OCI-LY7 (cell line): ENCODE measurements at regions of chr12 and their contacts with region 1.

Region 1: DNA sequence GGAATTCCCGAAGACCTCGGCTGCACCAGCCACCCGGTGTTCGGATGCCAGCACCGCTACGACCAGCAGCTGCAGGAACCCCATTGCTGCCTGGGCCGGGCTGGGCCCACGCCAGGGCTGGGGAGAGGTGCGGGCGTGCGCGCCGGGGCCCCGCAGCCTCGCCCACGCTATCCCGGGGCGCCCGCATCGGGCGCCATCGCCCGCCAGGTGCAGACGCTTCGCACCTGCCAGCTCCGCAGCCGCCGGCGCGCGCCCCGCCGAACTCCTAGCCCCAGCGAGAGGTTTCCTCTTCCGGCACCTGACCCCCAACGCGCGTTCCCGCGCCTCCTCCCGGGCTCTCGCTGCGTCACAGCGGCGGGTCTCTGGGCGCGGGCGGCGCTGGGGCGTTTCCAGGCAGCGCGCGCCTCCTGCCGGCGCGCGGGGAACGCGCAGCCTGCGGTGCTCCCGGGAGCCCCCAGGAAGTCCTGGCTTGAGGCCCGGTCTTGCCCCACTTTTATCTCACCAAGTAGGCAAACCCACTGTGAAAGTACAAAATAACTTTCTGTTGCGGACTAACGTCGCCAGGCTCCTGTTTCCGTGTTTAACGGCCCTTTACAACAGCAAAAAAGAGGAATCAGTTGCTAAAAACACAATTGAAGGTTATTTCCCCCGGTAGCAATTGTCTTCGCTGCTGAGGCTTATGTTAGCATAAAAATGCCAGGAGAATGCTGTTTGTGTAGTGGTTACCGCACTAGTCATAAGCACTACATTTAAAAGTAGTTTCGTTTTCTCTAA is at the start of gene TM7SF3:
- DNase-seq: peak; percentile 97
- H3K4me3 ChIP-seq: peak within 1 kb of the TSS; percentile 93
- H3K27ac ChIP-seq: peak within 1 kb of the TSS; percentile 63
- H3K4me1 ChIP-seq: peaks cover 55% of the 10 kb centered on the region
- CTCF ChIP-seq: peak; percentile 94
- total RNA-seq, gene TM7SF3: 38.2 and 48.3 TPM in 2 replicates

Region 2: GRCh38 chr12:26153421-26154154 is 860.7 kb before region 1 on chr12:
- CTCF ChIA-PET with region 1: no interaction called
- POLR2A ChIA-PET with region 1: no interaction called
- intact Hi-C with region 1: loop called (anchors 5 kb)
- DNase-seq: no peak
- H3K4me3 ChIP-seq: no peak overlapping the region
- H3K27ac ChIP-seq: no peak overlapping the region
- H3K4me1 ChIP-seq: peaks cover 22% of the 10 kb centered on the region
- CTCF ChIP-seq: no peak

Region 3: GRCh38 chr12:26732005-26732908 is 282.0 kb before region 1 on chr12:
- CTCF ChIA-PET with region 1: no interaction called
- POLR2A ChIA-PET with region 1: no interaction called
- intact Hi-C with region 1: loop called (anchors 10 kb)
- DNase-seq: peak; percentile 48
- H3K4me3 ChIP-seq: peak overlapping the region; percentile 8
- H3K27ac ChIP-seq: no peak overlapping the region
- H3K4me1 ChIP-seq: peaks cover 21% of the 10 kb centered on the region
- CTCF ChIP-seq: no peak

Region 4: DNA sequence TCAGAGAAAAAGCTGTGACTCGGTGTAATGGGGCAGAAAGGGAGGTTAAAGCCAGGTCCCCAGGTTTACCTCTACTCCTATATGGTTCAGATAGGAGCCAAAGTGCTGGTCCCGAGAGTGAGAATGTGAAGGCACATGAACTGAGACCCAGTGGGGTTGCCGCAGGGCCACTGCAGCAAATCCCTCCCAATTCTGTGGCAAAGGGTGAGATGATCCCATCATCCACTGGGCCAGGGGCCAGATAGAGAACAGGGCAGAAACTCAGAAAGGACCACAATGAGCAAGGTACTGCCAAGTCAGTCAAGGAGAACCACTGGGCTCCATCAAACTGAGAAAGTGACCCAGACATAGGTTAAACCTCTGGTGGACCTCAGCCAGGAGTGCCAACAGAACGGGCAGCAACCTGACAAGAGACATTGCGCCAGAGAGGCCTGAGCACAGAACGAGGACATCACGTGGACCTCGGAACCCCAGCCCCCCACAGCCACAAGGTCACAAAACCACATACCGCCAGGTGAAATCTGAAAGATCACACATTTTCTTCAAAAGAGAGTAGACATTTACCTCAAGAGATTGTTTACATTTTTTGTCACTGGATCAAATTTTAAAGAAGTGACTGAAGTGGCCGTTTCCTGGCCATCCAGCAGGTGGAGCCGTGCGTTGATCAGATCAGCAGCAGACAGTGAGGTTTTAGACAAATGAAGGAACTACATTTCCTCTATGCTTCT is 160.8 kb before region 1 on chr12:
- CTCF ChIA-PET with region 1: no interaction called
- POLR2A ChIA-PET with region 1: interaction called, 3 read pairs
- intact Hi-C with region 1: loop called (anchors 1 kb)
- DNase-seq: peak; percentile 84
- H3K4me3 ChIP-seq: peak overlapping the region; percentile 7
- H3K27ac ChIP-seq: no peak overlapping the region
- H3K4me1 ChIP-seq: peaks cover 23% of the 10 kb centered on the region
- CTCF ChIP-seq: peak; percentile 99

Region 5: GRCh38 chr12:27003421-27004381 is 10.6 kb before region 1 on chr12:
- CTCF ChIA-PET with region 1: interaction called, 3 read pairs
- POLR2A ChIA-PET with region 1: interaction called, 18 read pairs
- intact Hi-C with region 1: no loop called
- DNase-seq: peak; percentile 62
- H3K4me3 ChIP-seq: peak overlapping the region; percentile 53
- H3K27ac ChIP-seq: peak overlapping the region; percentile 64
- H3K4me1 ChIP-seq: peaks cover 71% of the 10 kb centered on the region
- CTCF ChIP-seq: no peak

Region 6: DNA sequence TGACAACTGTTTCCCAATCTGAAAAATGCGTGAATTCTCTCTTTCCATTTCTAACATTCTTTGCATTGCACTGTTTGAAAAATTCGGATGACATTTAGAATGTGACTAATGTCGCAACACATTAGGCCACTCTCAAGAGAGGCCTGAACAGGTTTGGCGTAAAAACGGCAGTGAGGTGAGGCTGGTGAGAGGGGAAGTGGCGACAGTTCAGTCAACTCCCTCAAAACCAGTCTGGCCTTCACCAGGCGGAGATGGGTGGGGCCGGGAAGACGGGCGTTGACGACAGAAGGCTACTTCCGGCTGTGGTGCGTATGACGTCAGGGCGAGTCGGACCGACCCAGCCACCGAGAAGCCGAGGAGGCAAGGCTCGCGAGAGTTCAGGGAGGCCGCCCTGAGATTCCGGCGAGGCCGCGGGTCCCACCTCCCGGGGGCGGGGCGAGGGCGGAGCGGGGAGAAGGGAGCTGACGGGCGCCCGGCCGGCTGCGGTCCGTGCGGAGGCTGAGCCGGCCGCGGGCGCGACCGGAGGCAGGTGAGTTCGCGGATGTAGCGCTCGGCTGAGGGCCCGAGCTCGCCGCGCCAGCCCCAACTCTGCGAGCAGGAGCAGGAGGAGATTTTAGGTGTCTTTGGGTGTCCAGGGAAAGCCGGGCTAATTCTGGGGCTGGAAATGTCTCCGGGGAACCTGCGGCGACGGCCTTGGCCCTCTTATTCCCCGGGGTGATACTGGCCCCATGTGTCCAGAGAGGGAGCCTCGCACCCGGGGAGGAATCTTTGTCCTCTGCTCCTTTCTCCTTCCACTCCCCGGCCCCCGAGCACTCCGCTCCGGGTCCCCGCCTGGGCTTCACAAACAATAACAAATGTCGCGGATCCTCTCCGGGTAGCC is 229.8 kb after region 1 on chr12 and contains the start of gene STK38L:
- CTCF ChIA-PET with region 1: no interaction called
- POLR2A ChIA-PET with region 1: no interaction called
- intact Hi-C with region 1: loop called (anchors 5 kb)
- DNase-seq: peak; percentile 94
- H3K4me3 ChIP-seq: peak within 1 kb of the TSS; percentile 74
- H3K27ac ChIP-seq: peak within 1 kb of the TSS; percentile 13
- H3K4me1 ChIP-seq: peaks cover 14% of the 10 kb centered on the region
- CTCF ChIP-seq: no peak
- total RNA-seq, gene STK38L: 15.2 and 18.9 TPM in 2 replicates